ENCODE measurements at regions of chr5 and their contacts with region 1.

Region 1: DNA sequence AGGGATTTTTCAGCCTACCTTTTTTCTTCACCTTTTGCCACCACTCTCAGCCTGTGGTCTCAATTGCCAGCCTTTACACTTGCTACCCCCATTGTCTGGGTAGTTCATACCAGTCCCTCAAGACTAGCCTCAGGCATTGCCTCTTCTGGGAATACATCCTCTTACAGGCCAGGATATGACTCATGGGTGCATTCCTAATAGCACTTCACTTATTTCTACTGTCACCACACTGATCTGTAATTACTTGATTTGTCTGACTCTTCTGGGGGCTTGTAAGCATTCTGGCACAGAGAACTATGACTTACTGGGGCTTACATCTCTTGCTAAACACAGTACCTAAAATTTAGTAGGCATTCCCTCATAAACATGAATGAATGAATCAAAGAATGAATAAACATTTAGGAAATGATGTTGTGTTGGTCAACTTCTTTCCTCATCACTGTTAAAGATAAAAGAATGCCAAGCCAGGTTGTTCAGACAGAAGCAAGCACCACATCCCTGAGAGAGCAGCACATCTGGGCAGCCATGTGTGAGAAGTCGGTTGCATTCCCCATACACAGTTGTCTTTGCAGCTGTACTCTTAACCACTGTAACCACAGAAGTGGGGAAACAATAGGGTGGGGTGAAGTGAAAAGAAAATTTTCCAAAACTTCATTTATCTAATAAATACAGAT is 27.6 kb downstream of the IL7R start:
- DNase-seq: no peak
- H3K4me3 ChIP-seq: no peak overlapping the region
- H3K4me3 Mint-ChIP-seq: peak overlapping the region in 2 of 8 donors; percentile 16 to 17
- H3K27ac ChIP-seq: no peak overlapping the region
- H3K27ac Mint-ChIP-seq: peak overlapping the region in 6 of 7 donors; percentile 9 to 61 (median 36)
- H3K4me1 ChIP-seq: peaks cover 33% of the 10 kb centered on the region
- H3K4me1 Mint-ChIP-seq: peaks cover 32 to 49% (median 39%) of the 10 kb centered on the region in 4 donors
- H3K27me3 ChIP-seq: no peaks in the 10 kb centered on the region
- H3K27me3 Mint-ChIP-seq: no peaks in the 10 kb centered on the region

Region 2: GRCh38 chr5:35319333-35320002 is 564.8 kb before region 1 on chr5:
- CTCF ChIA-PET with region 1: no interaction called
- POLR2A ChIA-PET with region 1: no interaction called
- intact Hi-C with region 1: no loop called
- DNase-seq: peak in 2 of 5 donors; percentile 1 to 3
- H3K4me3 ChIP-seq: no peak overlapping the region
- H3K4me3 Mint-ChIP-seq: no peak overlapping the region
- H3K27ac ChIP-seq: no peak overlapping the region
- H3K27ac Mint-ChIP-seq: no peak overlapping the region
- H3K4me1 ChIP-seq: no peaks in the 10 kb centered on the region
- H3K4me1 Mint-ChIP-seq: peaks cover 0 to 8% (median 0%) of the 10 kb centered on the region in 4 donors
- H3K27me3 ChIP-seq: no peaks in the 10 kb centered on the region
- H3K27me3 Mint-ChIP-seq: peaks cover 0 to 3% of the 10 kb centered on the region in 2 donors

Region 3: DNA sequence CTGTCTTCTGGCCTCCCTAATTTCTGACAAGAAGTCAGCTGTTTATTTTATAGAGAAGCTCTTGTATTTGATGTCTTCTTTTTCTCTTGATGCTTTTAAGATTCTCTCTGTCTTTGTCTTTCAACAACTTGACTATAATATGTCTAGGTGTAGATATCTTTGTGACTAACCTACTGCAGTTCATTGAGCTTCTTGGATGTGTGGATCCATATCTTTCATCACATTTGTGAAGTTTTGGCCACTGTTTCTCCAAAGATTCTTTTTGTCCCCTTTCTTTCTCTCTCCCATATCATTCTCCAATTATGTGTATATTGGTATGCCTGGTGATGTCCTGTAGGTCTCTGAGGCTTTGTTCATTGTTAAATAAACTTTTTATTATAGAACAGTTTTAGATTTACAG is 249.9 kb before region 1 on chr5:
- CTCF ChIA-PET with region 1: no interaction called
- POLR2A ChIA-PET with region 1: no interaction called
- intact Hi-C with region 1: no loop called
- DNase-seq: no peak
- H3K4me3 ChIP-seq: no peak overlapping the region
- H3K4me3 Mint-ChIP-seq: no peak overlapping the region
- H3K27ac ChIP-seq: no peak overlapping the region
- H3K27ac Mint-ChIP-seq: no peak overlapping the region
- H3K4me1 ChIP-seq: no peaks in the 10 kb centered on the region
- H3K4me1 Mint-ChIP-seq: no peaks in the 10 kb centered on the region
- H3K27me3 ChIP-seq: no peaks in the 10 kb centered on the region
- H3K27me3 Mint-ChIP-seq: no peaks in the 10 kb centered on the region

Region 4: GRCh38 chr5:35651002-35651756 is 233.1 kb before region 1 on chr5:
- CTCF ChIA-PET with region 1: interaction called, 15 read pairs
- POLR2A ChIA-PET with region 1: interaction called, 57 read pairs
- intact Hi-C with region 1: no loop called
- DNase-seq: peak; percentile 64 to 69 (median 68)
- H3K4me3 ChIP-seq: no peak overlapping the region
- H3K4me3 Mint-ChIP-seq: no peak overlapping the region
- H3K27ac ChIP-seq: no peak overlapping the region
- H3K27ac Mint-ChIP-seq: peak overlapping the region in 6 of 7 donors; percentile 16 to 74 (median 56)
- H3K4me1 ChIP-seq: peaks cover 4% of the 10 kb centered on the region
- H3K4me1 Mint-ChIP-seq: peaks cover 5 to 18% (median 14%) of the 10 kb centered on the region in 4 donors
- H3K27me3 ChIP-seq: no peaks in the 10 kb centered on the region
- H3K27me3 Mint-ChIP-seq: no peaks in the 10 kb centered on the region

Region 5: GRCh38 chr5:35785601-35786085 is 98.6 kb before region 1 on chr5:
- CTCF ChIA-PET with region 1: interaction called, 39 read pairs
- POLR2A ChIA-PET with region 1: interaction called, 170 read pairs
- intact Hi-C with region 1: no loop called
- DNase-seq: peak in 1 of 5 donors; percentile 44
- H3K4me3 ChIP-seq: no peak overlapping the region
- H3K4me3 Mint-ChIP-seq: peak overlapping the region in 7 of 8 donors; percentile 6 to 78 (median 65)
- H3K27ac ChIP-seq: no peak overlapping the region
- H3K27ac Mint-ChIP-seq: peak overlapping the region; percentile 45 to 94 (median 67)
- H3K4me1 ChIP-seq: peaks cover 83% of the 10 kb centered on the region
- H3K4me1 Mint-ChIP-seq: peaks cover 53 to 91% (median 76%) of the 10 kb centered on the region in 4 donors
- H3K27me3 ChIP-seq: no peaks in the 10 kb centered on the region
- H3K27me3 Mint-ChIP-seq: no peaks in the 10 kb centered on the region

Region 6: GRCh38 chr5:35815089-35815936 is 68.9 kb before region 1 on chr5:
- CTCF ChIA-PET with region 1: interaction called, 9 read pairs
- POLR2A ChIA-PET with region 1: interaction called, 238 read pairs
- intact Hi-C with region 1: no loop called
- DNase-seq: peak in 3 of 5 donors; percentile 51 to 55 (median 53)
- H3K4me3 ChIP-seq: peak overlapping the region in 1 of 2 donors; percentile 26
- H3K4me3 Mint-ChIP-seq: no peak overlapping the region
- H3K27ac ChIP-seq: peak overlapping the region; percentile 47
- H3K27ac Mint-ChIP-seq: no peak overlapping the region
- H3K4me1 ChIP-seq: peaks cover 97% of the 10 kb centered on the region
- H3K4me1 Mint-ChIP-seq: peaks cover 32 to 43% (median 36%) of the 10 kb centered on the region in 4 donors
- H3K27me3 ChIP-seq: no peaks in the 10 kb centered on the region
- H3K27me3 Mint-ChIP-seq: no peaks in the 10 kb centered on the region

Region 7: GRCh38 chr5:35857606-35858205 is 26.5 kb before region 1 on chr5:
- CTCF ChIA-PET with region 1: interaction called, 8 read pairs
- POLR2A ChIA-PET with region 1: interaction called, 437 read pairs
- intact Hi-C with region 1: loop called (anchors 1 kb)
- DNase-seq: peak in 3 of 5 donors; percentile 41 to 45 (median 44)
- H3K4me3 ChIP-seq: peak overlapping the region; percentile 82 to 85
- H3K4me3 Mint-ChIP-seq: peak overlapping the region; percentile 88 to 99 (median 96)
- H3K27ac ChIP-seq: peak overlapping the region; percentile 97
- H3K27ac Mint-ChIP-seq: peak overlapping the region; percentile 94 to 100 (median 100)
- H3K4me1 ChIP-seq: peaks cover 55% of the 10 kb centered on the region
- H3K4me1 Mint-ChIP-seq: peaks cover 42 to 73% (median 51%) of the 10 kb centered on the region in 4 donors
- H3K27me3 ChIP-seq: no peaks in the 10 kb centered on the region
- H3K27me3 Mint-ChIP-seq: no peaks in the 10 kb centered on the region

Region 8: GRCh38 chr5:35920890-35921289 is 36.6 kb after region 1 on chr5:
- CTCF ChIA-PET with region 1: interaction called, 4 read pairs
- POLR2A ChIA-PET with region 1: interaction called, 23 read pairs
- intact Hi-C with region 1: loop called (anchors 2 kb)
- DNase-seq: no peak
- H3K4me3 ChIP-seq: no peak overlapping the region
- H3K4me3 Mint-ChIP-seq: no peak overlapping the region
- H3K27ac ChIP-seq: no peak overlapping the region
- H3K27ac Mint-ChIP-seq: no peak overlapping the region
- H3K4me1 ChIP-seq: peaks cover 15% of the 10 kb centered on the region
- H3K4me1 Mint-ChIP-seq: peaks cover 22 to 36% (median 30%) of the 10 kb centered on the region in 4 donors
- H3K27me3 ChIP-seq: no peaks in the 10 kb centered on the region
- H3K27me3 Mint-ChIP-seq: peaks cover 0 to 2% of the 10 kb centered on the region in 2 donors

Region 9: GRCh38 chr5:36108758-36109460 is 224.7 kb after region 1 on chr5:
- CTCF ChIA-PET with region 1: no interaction called
- POLR2A ChIA-PET with region 1: no interaction called
- intact Hi-C with region 1: no loop called
- DNase-seq: no peak
- H3K4me3 ChIP-seq: no peak overlapping the region
- H3K4me3 Mint-ChIP-seq: no peak overlapping the region
- H3K27ac ChIP-seq: no peak overlapping the region
- H3K27ac Mint-ChIP-seq: no peak overlapping the region
- H3K4me1 ChIP-seq: no peaks in the 10 kb centered on the region
- H3K4me1 Mint-ChIP-seq: no peaks in the 10 kb centered on the region
- H3K27me3 ChIP-seq: no peaks in the 10 kb centered on the region
- H3K27me3 Mint-ChIP-seq: no peaks in the 10 kb centered on the region

Measured in CD4-positive, alpha-beta memory T cell (primary cell).